Activated T-helper 1 cell treated with anti-CD3 and anti-CD28 coated beads, Interleukin-12 subunit alpha, Interleukin-12 subunit beta, Interleukin-2, Interleukin-4 antibody, amounts not matched to agents 30 ng/mL and 10 ng/mL and 1 ng/mL, durations not matched to agents 14 hours and 24 hours and 36 hours (primary cell): ENCODE measurements at regions of chr4 and their contacts with region 1.

Region 1: GRCh38 chr4:6180841-6181631 is 19.3 kb downstream of the JAKMIP1 start:
- DNase-seq: peak; percentile 74
- H3K4me3 Mint-ChIP-seq: peak overlapping the region; percentile 72
- H3K27ac Mint-ChIP-seq: peak overlapping the region; percentile 95
- H3K4me1 Mint-ChIP-seq: peaks cover 86% of the 10 kb centered on the region
- H3K27me3 Mint-ChIP-seq: no peaks in the 10 kb centered on the region

Region 2: GRCh38 chr4:5863461-5864113 is 317.4 kb before region 1 on chr4:
- intact Hi-C with region 1: loop called (anchors 10 kb)
- DNase-seq: peak; percentile 40
- H3K4me3 Mint-ChIP-seq: peak overlapping the region; percentile 19
- H3K27ac Mint-ChIP-seq: no peak overlapping the region
- H3K4me1 Mint-ChIP-seq: peaks cover 36% of the 10 kb centered on the region
- H3K27me3 Mint-ChIP-seq: no peaks in the 10 kb centered on the region

Region 3: GRCh38 chr4:6076391-6076790 is 104.6 kb before region 1 on chr4:
- intact Hi-C with region 1: no loop called
- DNase-seq: no peak
- H3K4me3 Mint-ChIP-seq: no peak overlapping the region
- H3K27ac Mint-ChIP-seq: no peak overlapping the region
- H3K4me1 Mint-ChIP-seq: no peaks in the 10 kb centered on the region
- H3K27me3 Mint-ChIP-seq: no peaks in the 10 kb centered on the region

Region 4: DNA sequence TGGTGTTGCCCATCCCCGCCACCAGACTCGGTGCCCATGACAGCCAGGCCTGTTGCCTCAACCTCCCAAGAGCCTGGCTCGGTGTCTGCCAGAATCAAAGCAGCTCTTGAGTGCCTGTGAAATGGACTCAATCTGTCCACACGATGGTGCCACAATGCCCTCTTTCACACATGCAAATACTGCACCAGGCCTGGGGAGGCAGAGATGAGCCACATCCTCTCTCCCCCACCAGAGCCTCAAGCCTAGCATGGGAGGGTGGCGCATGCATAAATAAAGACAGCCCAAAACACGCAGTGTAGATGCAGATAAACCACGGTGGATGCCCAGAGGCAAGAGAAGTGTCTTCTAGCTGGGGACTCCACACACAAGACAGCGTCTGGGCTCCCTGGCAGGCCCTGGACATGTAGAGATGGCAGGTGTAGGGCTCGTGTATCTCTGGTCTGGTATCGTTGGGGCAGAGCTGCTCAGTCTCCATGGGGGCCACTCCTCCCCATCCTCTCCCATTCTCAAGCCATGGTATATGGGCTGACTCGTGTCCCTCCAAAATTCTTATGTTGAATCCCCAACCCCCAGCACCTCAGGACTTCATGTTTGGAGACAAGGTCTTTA is 46.3 kb before region 1 on chr4:
- intact Hi-C with region 1: loop called (anchors 5 kb)
- DNase-seq: peak; percentile 46
- H3K4me3 Mint-ChIP-seq: no peak overlapping the region
- H3K27ac Mint-ChIP-seq: no peak overlapping the region
- H3K4me1 Mint-ChIP-seq: peaks cover 20% of the 10 kb centered on the region
- H3K27me3 Mint-ChIP-seq: no peaks in the 10 kb centered on the region

Region 5: GRCh38 chr4:6198768-6199421 is 17.9 kb after region 1 on chr4:
- intact Hi-C with region 1: loop called (anchors 1 kb)
- DNase-seq: no peak
- H3K4me3 Mint-ChIP-seq: peak overlapping the region; percentile 87
- H3K27ac Mint-ChIP-seq: peak overlapping the region; percentile 83
- H3K4me1 Mint-ChIP-seq: peaks cover 46% of the 10 kb centered on the region
- H3K27me3 Mint-ChIP-seq: peaks cover 12% of the 10 kb centered on the region

Region 6: GRCh38 chr4:6269616-6270511 is 88.8 kb after region 1 on chr4 and contains the start of gene WFS1:
- intact Hi-C with region 1: loop called (anchors 2 kb)
- DNase-seq: peak; percentile 96
- H3K4me3 Mint-ChIP-seq: peak within 1 kb of the TSS; percentile 81
- H3K27ac Mint-ChIP-seq: no peak within 1 kb of the TSS
- H3K4me1 Mint-ChIP-seq: peaks cover 18% of the 10 kb centered on the region
- H3K27me3 Mint-ChIP-seq: peaks cover 34% of the 10 kb centered on the region
- total RNA-seq, gene WFS1: 5.7 and 9.3 TPM in 2 replicates